Activated CD4-positive, alpha-beta T cell treated with anti-CD3 and anti-CD28 coated beads for 36 hours (primary cell): ENCODE measurements at regions of chr22 and their contacts with region 1.

Region 1: GRCh38 chr22:50244420-50245213 is at the start of gene TUBGCP6:
- DNase-seq: peak; percentile 96
- ATAC-seq: peak; percentile 80
- H3K4me3 Mint-ChIP-seq: peak within 1 kb of the TSS; percentile 94
- H3K27ac Mint-ChIP-seq: peak within 1 kb of the TSS; percentile 100
- H3K4me1 Mint-ChIP-seq: peaks cover 23% of the 10 kb centered on the region
- H3K27me3 Mint-ChIP-seq: no peaks in the 10 kb centered on the region
- total RNA-seq, gene TUBGCP6: 42.2 to 49.2 TPM

Region 2: DNA sequence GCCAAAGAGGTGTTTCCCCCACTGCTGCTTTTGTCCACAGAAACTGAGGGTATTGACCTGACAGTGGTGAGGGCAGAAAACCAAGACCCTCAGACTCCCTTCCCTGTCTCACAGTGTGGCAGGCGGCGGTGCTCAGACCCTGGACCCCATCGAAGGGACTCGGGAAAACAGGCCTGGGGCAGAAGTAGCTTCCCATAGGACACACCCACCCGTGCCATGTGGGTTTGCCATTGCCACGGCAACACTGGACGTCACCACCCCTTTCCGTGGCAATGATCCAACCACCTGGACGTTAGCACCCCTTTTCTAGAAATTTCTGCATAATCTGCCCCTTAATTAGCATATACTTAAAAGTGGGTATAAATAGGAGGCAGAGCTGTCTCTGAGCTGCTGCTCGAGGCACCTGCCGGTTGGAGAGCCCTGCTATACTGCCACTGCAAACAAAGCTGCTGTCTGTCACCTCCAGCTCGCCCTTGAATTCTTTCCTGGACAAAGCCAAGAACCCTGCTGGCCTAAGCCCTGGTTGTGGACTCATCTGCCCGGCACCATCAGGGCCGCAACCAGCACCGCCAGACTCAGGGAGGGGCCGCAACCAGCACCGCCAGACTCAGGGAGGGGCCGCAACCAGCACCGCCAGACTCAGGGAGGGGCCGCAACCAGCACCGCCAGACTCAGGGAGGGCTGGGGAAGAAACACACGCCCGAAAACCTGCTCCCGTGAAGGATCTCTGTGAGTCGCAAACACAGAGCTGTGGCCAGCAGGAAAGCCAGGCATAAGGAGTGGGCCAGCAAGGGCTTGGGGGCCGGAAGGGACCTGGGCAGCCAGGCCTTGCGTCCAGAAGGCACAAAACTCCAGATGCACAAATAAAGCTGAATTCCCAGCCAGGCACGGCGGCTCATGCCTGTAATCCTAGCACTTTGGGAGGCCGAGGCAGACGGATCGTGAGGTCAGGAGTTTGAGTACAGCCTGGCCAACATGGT is 169.8 kb before region 1 on chr22:
- CTCF ChIA-PET with region 1: no interaction called
- POLR2A ChIA-PET with region 1: no interaction called
- intact Hi-C with region 1: no loop called
- DNase-seq: no peak
- ATAC-seq: no peak
- H3K4me3 Mint-ChIP-seq: no peak overlapping the region
- H3K27ac Mint-ChIP-seq: no peak overlapping the region
- H3K4me1 Mint-ChIP-seq: no peaks in the 10 kb centered on the region
- H3K27me3 Mint-ChIP-seq: no peaks in the 10 kb centered on the region

Region 3: GRCh38 chr22:50200461-50201190 is 44.0 kb before region 1 on chr22 and contains the start of gene SELENOO:
- CTCF ChIA-PET with region 1: no interaction called
- POLR2A ChIA-PET with region 1: no interaction called
- intact Hi-C with region 1: loop called in 1 of 2 experiments (anchors 1 kb)
- DNase-seq: peak; percentile 94
- ATAC-seq: peak; percentile 91
- H3K4me3 Mint-ChIP-seq: peak within 1 kb of the TSS; percentile 79
- H3K27ac Mint-ChIP-seq: no peak within 1 kb of the TSS
- H3K4me1 Mint-ChIP-seq: peaks cover 23% of the 10 kb centered on the region
- H3K27me3 Mint-ChIP-seq: no peaks in the 10 kb centered on the region
- total RNA-seq, gene SELENOO: 14.4 to 18.3 TPM

Region 4: GRCh38 chr22:50233223-50233622 is 11.4 kb before region 1 on chr22:
- CTCF ChIA-PET with region 1: interaction called, 16 read pairs
- POLR2A ChIA-PET with region 1: no interaction called
- intact Hi-C with region 1: no loop called
- DNase-seq: no peak
- ATAC-seq: no peak
- H3K4me3 Mint-ChIP-seq: no peak overlapping the region
- H3K27ac Mint-ChIP-seq: no peak overlapping the region
- H3K4me1 Mint-ChIP-seq: peaks cover 10% of the 10 kb centered on the region
- H3K27me3 Mint-ChIP-seq: no peaks in the 10 kb centered on the region

Region 5: GRCh38 chr22:50270666-50271394 is 26.2 kb after region 1 on chr22:
- CTCF ChIA-PET with region 1: interaction called, 5 read pairs
- POLR2A ChIA-PET with region 1: no interaction called
- intact Hi-C with region 1: loop called (anchors 1 to 2 kb)
- DNase-seq: peak; percentile 86
- ATAC-seq: peak; percentile 46
- H3K4me3 Mint-ChIP-seq: peak overlapping the region; percentile 65
- H3K27ac Mint-ChIP-seq: no peak overlapping the region
- H3K4me1 Mint-ChIP-seq: peaks cover 13% of the 10 kb centered on the region
- H3K27me3 Mint-ChIP-seq: peaks cover 4% of the 10 kb centered on the region

Region 6: DNA sequence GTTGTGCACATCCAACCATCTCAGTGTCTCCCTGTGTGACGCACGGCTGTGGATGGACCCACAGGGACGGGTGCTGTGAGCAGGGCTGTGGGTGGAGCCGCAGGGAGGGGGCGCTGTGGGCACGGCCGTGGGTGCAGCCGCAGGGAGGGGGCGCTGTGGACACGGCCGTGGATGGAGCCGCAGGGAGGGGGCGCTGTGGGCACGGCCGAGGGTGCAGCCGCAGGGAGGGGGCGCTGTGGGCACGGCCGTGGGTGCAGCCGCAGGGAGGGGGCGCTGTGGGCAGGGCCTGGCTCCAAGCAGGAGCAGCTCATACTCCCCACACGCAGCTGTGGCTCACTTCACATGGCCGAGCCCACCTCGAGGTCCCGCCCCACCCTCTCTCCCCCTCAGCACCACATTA is 31.5 kb after region 1 on chr22:
- CTCF ChIA-PET with region 1: interaction called, 3 read pairs
- POLR2A ChIA-PET with region 1: no interaction called
- intact Hi-C with region 1: loop called in 1 of 2 experiments (anchors 2 kb)
- DNase-seq: peak; percentile 81
- ATAC-seq: peak; percentile 70
- H3K4me3 Mint-ChIP-seq: no peak overlapping the region
- H3K27ac Mint-ChIP-seq: no peak overlapping the region
- H3K4me1 Mint-ChIP-seq: peaks cover 1% of the 10 kb centered on the region
- H3K27me3 Mint-ChIP-seq: peaks cover 2% of the 10 kb centered on the region

Region 7: GRCh38 chr22:50326959-50327710 is 82.5 kb after region 1 on chr22 and contains the start of gene DENND6B:
- CTCF ChIA-PET with region 1: interaction called, 3 read pairs
- POLR2A ChIA-PET with region 1: no interaction called
- intact Hi-C with region 1: loop called (anchors 1 to 5 kb)
- DNase-seq: peak; percentile 88
- ATAC-seq: peak; percentile 95
- H3K4me3 Mint-ChIP-seq: peak within 1 kb of the TSS; percentile 74
- H3K27ac Mint-ChIP-seq: peak within 1 kb of the TSS; percentile 63
- H3K4me1 Mint-ChIP-seq: peaks cover 14% of the 10 kb centered on the region
- H3K27me3 Mint-ChIP-seq: peaks cover 7% of the 10 kb centered on the region
- total RNA-seq, gene DENND6B: 2.8 TPM

Region 8: DNA sequence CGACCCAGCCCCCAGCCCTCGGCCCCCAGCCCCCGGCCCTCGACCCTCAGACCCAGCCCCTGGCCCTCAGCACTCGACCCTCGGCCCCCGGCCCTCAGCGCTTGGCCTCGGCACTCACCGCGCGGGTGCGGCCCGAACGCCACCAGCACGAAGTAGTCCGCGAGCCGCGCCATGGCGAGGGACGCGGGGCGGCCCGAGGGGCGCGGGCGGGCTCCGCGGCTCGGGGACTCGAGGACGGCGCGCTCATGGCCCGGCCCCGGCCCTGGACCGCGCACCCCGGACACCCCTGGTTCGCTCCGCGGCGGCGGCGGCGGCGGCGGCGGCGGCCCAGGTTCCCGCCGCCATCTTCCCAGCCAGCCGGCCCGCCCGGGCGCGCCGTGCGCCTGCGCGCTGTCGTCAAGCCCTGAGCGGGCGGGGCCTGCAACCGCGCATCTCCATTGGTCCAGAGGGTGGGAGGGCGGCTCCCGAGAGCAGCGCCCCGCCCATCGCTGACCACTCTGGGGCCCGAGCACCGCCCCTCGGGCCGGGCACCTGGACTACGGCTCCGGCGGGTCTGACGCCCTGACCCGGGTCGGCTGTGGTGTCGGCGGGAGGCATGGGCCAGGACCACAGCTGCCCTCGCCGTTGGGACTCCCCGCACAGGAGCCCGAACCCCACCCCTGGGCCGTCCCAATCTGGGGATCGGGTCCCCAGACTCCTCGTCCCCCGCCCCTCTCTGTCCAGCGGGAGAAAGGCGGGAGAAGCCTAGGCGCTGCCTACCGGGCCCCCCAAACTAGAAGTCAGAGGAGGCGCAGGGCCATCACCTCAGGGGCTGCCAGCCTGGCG is 230.3 kb after region 1 on chr22 and contains the start of gene SBF1:
- CTCF ChIA-PET with region 1: interaction called, 3 read pairs
- POLR2A ChIA-PET with region 1: no interaction called
- intact Hi-C with region 1: loop called in 1 of 2 experiments (anchors 2 kb)
- DNase-seq: peak; percentile 95
- ATAC-seq: peak; percentile 78
- H3K4me3 Mint-ChIP-seq: peak within 1 kb of the TSS; percentile 89
- H3K27ac Mint-ChIP-seq: peak within 1 kb of the TSS; percentile 83
- H3K4me1 Mint-ChIP-seq: peaks cover 42% of the 10 kb centered on the region
- H3K27me3 Mint-ChIP-seq: peaks cover 2% of the 10 kb centered on the region
- total RNA-seq, gene SBF1: 97.6 TPM